SK-N-SH (cell line): ENCODE measurements at regions of chr11 and their contacts with region 1.

Region 1: DNA sequence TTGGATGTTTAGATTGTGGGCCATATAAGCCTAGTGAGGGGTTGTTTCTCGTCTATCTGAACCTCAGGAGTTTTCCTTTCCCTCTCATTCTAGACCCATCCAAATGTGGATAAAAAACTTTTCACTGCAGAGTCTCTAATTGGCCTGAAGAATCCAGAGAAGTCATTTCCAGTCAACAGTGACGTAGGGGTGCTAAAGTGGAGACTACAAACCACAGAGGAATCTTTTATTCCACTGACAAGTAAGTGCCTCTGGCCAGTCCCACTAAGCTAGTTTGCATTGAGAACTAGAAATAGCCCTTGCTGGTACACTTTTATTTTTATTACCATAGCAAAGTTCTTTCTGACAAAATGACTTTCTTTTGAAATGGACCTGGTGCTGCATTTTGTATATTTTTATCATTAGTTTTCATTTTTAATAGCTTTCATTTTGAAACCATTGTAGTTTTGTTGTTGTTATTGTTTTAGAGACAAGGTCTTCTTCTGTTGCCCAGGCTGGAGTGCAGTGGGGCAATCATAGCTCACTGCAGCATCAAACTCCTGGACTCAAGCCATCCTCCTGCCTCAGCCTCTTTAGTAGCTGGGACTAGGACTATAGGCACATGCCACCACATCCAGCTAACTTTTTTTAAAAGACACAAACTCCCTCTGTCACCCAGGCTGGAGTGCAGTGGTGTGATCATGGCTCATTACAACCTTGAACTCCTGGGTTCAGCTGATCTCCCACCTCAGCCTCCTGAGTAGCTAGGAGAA is 14.6 kb upstream of the PHLDB1 start:
- DNase-seq: no peak
- H3K4me3 ChIP-seq: no peak overlapping the region
- H3K27ac ChIP-seq: peak overlapping the region in 1 of 2 experiments; percentile 18; a peak in 1 of 4 replicates
- H3K4me1 ChIP-seq: peaks cover 0 to 6% of the 10 kb centered on the region in 2 experiments; a peak in 2 of 4 replicates
- H3K27me3 ChIP-seq: no peaks in the 10 kb centered on the region
- CTCF ChIP-seq: no peak
- EP300 ChIP-seq: no peak
- RAD21 ChIP-seq: no peak

Region 2: GRCh38 chr11:118605116-118605867 is 12.5 kb after region 1 on chr11:
- CTCF ChIA-PET with region 1: interaction called, 22 read pairs
- POLR2A ChIA-PET with region 1: no interaction called
- DNase-seq: peak; percentile 78
- H3K4me3 ChIP-seq: no peak overlapping the region
- H3K27ac ChIP-seq: peak overlapping the region; percentile 71 to 73; a peak in 3 of 4 replicates
- H3K4me1 ChIP-seq: peaks cover 28 to 31% of the 10 kb centered on the region in 2 experiments
- H3K27me3 ChIP-seq: no peaks in the 10 kb centered on the region
- CTCF ChIP-seq: no peak
- EP300 ChIP-seq: no peak; a peak in 1 of 4 replicates
- RAD21 ChIP-seq: 0 out of 2 replicates have a peak, but pooled peaks have one; percentile 16

Region 3: GRCh38 chr11:118621071-118621783 is 28.4 kb after region 1 on chr11:
- CTCF ChIA-PET with region 1: interaction called, 24 read pairs
- POLR2A ChIA-PET with region 1: interaction called, 3 read pairs
- DNase-seq: peak; percentile 93
- H3K4me3 ChIP-seq: peak overlapping the region; percentile 79 to 95
- H3K27ac ChIP-seq: peak overlapping the region; percentile 97 to 100
- H3K4me1 ChIP-seq: peaks cover 44 to 66% of the 10 kb centered on the region in 2 experiments
- H3K27me3 ChIP-seq: no peaks in the 10 kb centered on the region
- CTCF ChIP-seq: no peak
- EP300 ChIP-seq: no peak
- RAD21 ChIP-seq: no peak

Region 4: DNA sequence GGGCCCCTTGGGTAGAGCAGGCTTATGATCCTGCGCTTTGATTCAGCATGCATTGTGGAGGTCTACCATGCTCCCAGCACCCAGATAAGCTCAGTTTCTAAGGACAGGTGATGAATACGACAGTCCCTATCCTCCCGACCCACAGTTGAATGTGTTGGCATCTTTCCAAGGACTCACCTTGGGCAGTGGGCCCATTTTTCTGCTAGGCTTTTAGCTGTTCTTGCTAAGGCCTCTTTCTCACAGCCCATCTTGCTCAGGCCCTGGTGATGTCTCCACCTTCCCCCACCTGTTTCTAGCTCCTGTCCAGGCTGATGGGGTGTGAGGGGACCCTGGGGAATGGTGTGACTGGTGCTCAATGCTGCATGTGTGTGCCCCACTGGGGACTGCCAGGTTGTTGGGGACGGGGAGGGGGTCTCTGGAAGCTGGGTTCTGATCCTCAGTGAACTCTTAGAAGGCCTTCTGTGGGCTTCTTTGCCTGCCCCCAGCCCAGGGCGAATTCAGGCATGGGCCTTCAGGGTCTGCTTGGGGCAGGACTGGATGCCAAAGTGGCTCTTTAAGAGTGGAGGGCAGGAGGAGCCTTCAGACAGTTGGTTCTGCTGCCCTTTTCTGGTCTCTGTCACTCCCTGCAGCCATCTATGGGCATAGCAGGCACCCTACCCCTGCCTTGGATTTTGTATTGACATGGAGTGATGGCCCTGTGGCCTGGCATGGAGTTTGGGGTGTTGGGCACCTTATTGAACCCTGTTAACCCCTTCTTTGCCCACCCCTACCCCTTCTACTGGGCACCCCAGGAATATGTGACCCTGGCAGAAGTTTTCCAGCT is 47.8 kb after region 1 on chr11:
- CTCF ChIA-PET with region 1: interaction called, 20 read pairs
- POLR2A ChIA-PET with region 1: interaction called, 3 read pairs
- DNase-seq: peak; percentile 52
- H3K4me3 ChIP-seq: no peak overlapping the region
- H3K27ac ChIP-seq: peak overlapping the region in 1 of 2 experiments; percentile 77; a peak in 1 of 4 replicates
- H3K4me1 ChIP-seq: peaks cover 0 to 34% of the 10 kb centered on the region in 2 experiments; a peak in 1 of 4 replicates
- H3K27me3 ChIP-seq: no peaks in the 10 kb centered on the region
- CTCF ChIP-seq: peak; percentile 21; the same call in 1 of the 2 replicates
- EP300 ChIP-seq: no peak
- RAD21 ChIP-seq: peak; percentile 69